HepG2 (cell line): ENCODE measurements at regions of chr6 and their contacts with region 1.

Region 1: GRCh38 chr6:44270526-44271405 is 516 bp downstream of the TMEM151B start:
- DNase-seq: no peak
- ATAC-seq: no peak
- H3K4me3 ChIP-seq: peak overlapping the region; percentile 33 to 62 (median 42); a peak in 5 of 6 replicates
- H3K27ac ChIP-seq: no peak overlapping the region
- H3K4me1 ChIP-seq: peaks cover 31% of the 10 kb centered on the region
- H3K27me3 ChIP-seq: peaks cover 20 to 66% of the 10 kb centered on the region in 2 experiments
- CTCF ChIP-seq: no peak
- EP300 ChIP-seq: no peak
- POLR2A ChIP-seq: no peak
- RAD21 ChIP-seq: no peak

Region 2: DNA sequence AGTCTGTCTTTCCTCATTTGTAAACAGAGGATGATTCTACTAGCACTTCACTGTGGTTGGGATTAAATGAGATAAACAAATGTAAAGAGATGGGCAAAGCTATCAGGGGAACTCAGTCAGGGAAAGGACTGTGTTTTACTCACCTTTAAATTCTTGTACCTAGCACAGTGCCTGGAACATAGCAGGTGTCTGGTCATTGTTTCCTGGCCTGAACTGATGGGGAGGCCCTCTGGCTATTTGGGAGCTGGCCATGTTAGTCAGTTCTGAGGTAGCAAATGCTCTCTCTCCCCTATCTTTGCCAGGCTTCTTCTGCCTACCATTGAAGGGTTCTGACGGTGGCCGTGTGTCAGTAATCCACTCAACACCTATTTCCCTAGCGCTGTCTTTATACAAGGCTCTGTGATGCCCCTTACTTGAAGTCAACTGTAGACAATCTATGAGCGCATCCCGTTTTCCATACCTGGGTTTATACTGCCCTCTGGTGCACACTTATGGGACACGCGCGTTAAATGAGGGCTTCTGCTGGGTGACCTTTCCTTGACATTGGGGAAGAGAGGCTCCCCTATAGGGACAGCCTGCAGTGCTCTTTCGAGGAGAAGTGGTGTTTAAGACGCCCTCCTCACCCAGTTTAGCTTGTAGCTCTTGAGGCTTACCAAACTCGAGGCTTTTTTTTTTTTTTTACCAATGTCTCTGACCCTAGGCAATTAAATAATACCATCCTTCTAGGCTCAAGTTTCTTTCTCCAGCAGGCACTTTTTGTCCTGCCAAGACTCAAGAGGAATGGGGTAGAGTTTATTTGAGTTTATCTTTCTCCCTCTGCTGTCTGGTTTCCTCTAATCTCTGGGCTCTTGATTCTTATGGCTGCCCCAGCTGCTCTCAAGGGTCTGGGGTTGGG is 67.7 kb after region 1 on chr6:
- CTCF ChIA-PET with region 1: interaction called, 65 read pairs
- POLR2A ChIA-PET with region 1: no interaction called
- in situ Hi-C with region 1: loop called (anchors 5 kb)
- intact Hi-C with region 1: loop called (anchors 1 kb)
- DNase-seq: peak; percentile 72
- ATAC-seq: peak; percentile 89
- H3K4me3 ChIP-seq: no peak overlapping the region
- H3K27ac ChIP-seq: no peak overlapping the region
- H3K4me1 ChIP-seq: no peaks in the 10 kb centered on the region
- H3K27me3 ChIP-seq: peaks cover 0 to 56% of the 10 kb centered on the region in 2 experiments; a peak in 4 of 5 replicates
- CTCF ChIP-seq: peak; percentile 94
- EP300 ChIP-seq: no peak
- POLR2A ChIP-seq: no peak
- RAD21 ChIP-seq: peak; percentile 87